ENCODE measurements at regions of chr22 and their contacts with region 1.

Region 1: GRCh38 chr22:40636380-40637182 is at the start of gene MRTFA:
- DNase-seq: peak; percentile 97 to 100 (median 99)
- ATAC-seq: peak; percentile 93
- H3K4me3 ChIP-seq: peak within 1 kb of the TSS; percentile 96
- H3K4me3 Mint-ChIP-seq: peak within 1 kb of the TSS; percentile 100
- H3K27ac ChIP-seq: peak within 1 kb of the TSS; percentile 88 to 93
- H3K27ac Mint-ChIP-seq: peak within 1 kb of the TSS; percentile 99
- H3K4me1 ChIP-seq: peaks cover 38% of the 10 kb centered on the region
- H3K4me1 Mint-ChIP-seq: peaks cover 48% of the 10 kb centered on the region
- H3K27me3 ChIP-seq: no peaks in the 10 kb centered on the region
- H3K27me3 Mint-ChIP-seq: no peaks in the 10 kb centered on the region
- CTCF ChIP-seq: no peak
- total RNA-seq, gene MRTFA: 55.3 to 58.9 TPM

Region 2: DNA sequence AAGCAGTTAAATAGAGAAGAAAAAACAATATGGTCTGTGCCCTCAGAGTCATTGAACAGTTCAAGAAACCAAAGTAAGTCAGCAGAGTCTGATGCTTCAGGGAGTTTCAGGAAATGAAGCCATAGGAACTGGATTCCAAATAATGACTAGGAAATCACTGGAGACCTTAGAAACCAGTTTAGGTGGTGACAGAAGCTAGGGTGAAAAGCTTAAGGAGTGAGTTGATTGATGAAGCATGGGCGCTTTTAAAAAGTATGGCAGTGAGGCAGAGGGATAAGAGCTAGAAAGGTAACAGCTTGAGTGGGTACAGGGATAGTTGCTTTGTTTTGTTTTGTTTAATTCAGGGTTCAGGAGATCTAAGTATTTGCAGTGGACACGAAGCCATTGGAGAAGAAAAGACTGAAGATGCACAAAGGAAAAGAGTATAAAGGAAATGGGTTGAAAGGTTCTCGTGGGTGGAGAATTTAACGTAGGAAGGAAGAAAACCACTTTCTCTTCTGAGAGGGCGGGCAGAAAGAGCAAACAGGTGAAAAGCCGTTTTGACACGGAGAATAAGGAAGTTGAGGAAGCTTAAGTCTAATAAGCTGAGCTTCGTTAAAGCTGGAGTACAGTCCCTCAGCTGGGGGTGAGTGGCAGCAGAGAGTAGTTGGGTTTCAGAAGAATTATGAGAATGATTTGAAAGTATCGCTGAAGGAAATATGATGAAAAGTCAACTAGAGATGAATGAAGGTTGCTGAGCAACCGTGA is 251.4 kb before region 1 on chr22:
- CTCF ChIA-PET with region 1: no interaction called
- POLR2A ChIA-PET with region 1: interaction called, 12 read pairs
- intact Hi-C with region 1: no loop called
- DNase-seq: peak in 8 of 14 experiments; percentile 19 to 78 (median 44)
- ATAC-seq: peak; percentile 96
- H3K4me3 ChIP-seq: peak overlapping the region; percentile 37
- H3K4me3 Mint-ChIP-seq: peak overlapping the region; percentile 82
- H3K27ac ChIP-seq: peak overlapping the region; percentile 50 to 67
- H3K27ac Mint-ChIP-seq: peak overlapping the region; percentile 90
- H3K4me1 ChIP-seq: peaks cover 42% of the 10 kb centered on the region
- H3K4me1 Mint-ChIP-seq: peaks cover 65% of the 10 kb centered on the region
- H3K27me3 ChIP-seq: no peaks in the 10 kb centered on the region
- H3K27me3 Mint-ChIP-seq: no peaks in the 10 kb centered on the region
- CTCF ChIP-seq: no peak

Region 3: DNA sequence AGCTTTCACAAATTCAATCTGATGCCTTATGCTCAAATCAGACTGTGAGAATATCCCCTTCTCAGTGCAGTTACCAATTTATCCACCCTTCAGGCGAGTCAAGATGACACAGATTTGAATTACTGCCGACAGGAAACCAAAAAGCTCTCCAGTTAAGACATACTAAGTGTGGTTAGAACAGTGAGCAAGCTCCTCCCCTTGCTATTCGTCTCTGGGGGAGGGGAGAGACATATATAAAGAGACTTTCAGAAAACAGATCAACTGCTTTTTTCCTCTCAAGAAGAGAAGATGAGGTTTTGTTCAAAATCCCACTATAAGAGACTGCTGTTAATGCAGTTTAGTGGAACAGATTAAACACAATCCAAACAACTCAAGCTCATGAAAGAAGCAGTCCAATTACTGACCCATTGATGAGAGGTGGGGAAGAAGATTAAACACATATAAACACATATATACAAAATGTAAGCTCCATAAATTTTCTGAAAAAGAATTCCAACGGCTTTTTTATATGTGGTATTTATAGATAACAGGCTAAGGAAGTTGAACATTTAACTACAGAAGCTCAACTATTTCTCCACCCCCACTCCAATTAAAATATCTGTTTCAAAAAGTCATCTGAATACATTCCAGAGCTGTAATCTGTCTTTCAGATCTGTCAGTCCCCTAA is 102.7 kb before region 1 on chr22:
- CTCF ChIA-PET with region 1: interaction called, 5 read pairs
- POLR2A ChIA-PET with region 1: interaction called, 72 read pairs
- intact Hi-C with region 1: no loop called
- DNase-seq: peak; percentile 21 to 90 (median 47)
- ATAC-seq: peak; percentile 98
- H3K4me3 ChIP-seq: peak overlapping the region; percentile 54
- H3K4me3 Mint-ChIP-seq: peak overlapping the region; percentile 84
- H3K27ac ChIP-seq: peak overlapping the region; percentile 44 to 49
- H3K27ac Mint-ChIP-seq: peak overlapping the region; percentile 88
- H3K4me1 ChIP-seq: peaks cover 31% of the 10 kb centered on the region
- H3K4me1 Mint-ChIP-seq: peaks cover 71% of the 10 kb centered on the region
- H3K27me3 ChIP-seq: no peaks in the 10 kb centered on the region
- H3K27me3 Mint-ChIP-seq: no peaks in the 10 kb centered on the region
- CTCF ChIP-seq: no peak

Region 4: GRCh38 chr22:40714192-40714951 is 77.8 kb after region 1 on chr22:
- CTCF ChIA-PET with region 1: no interaction called
- POLR2A ChIA-PET with region 1: no interaction called
- intact Hi-C with region 1: no loop called
- DNase-seq: peak in 1 of 14 experiments; percentile 5
- ATAC-seq: no peak
- H3K4me3 ChIP-seq: no peak overlapping the region
- H3K4me3 Mint-ChIP-seq: no peak overlapping the region
- H3K27ac ChIP-seq: no peak overlapping the region
- H3K27ac Mint-ChIP-seq: no peak overlapping the region
- H3K4me1 ChIP-seq: peaks cover 15% of the 10 kb centered on the region
- H3K4me1 Mint-ChIP-seq: peaks cover 20% of the 10 kb centered on the region
- H3K27me3 ChIP-seq: no peaks in the 10 kb centered on the region
- H3K27me3 Mint-ChIP-seq: no peaks in the 10 kb centered on the region
- CTCF ChIP-seq: no peak

Region 5: DNA sequence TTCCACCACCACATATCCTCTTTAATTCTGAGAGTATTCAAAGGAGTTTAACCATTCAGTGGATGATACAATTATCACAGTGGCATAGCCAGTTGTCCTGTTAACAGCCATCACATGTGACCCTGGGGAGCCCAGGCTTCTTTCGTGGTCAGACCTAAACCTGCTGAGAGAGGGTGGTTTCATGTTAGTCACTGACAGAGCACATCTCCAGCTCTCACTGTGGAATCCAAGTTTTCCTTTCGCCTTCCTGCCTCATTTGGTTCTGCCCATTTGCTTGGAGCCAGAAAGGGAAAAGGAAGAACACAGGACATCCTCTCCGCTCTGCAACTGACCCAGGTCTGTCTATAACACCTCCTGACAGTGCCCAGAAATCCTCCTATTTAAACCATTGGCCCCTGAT is 103.1 kb after region 1 on chr22:
- CTCF ChIA-PET with region 1: no interaction called
- POLR2A ChIA-PET with region 1: no interaction called
- intact Hi-C with region 1: no loop called
- DNase-seq: no peak
- ATAC-seq: no peak
- H3K4me3 ChIP-seq: no peak overlapping the region
- H3K4me3 Mint-ChIP-seq: no peak overlapping the region
- H3K27ac ChIP-seq: no peak overlapping the region
- H3K27ac Mint-ChIP-seq: no peak overlapping the region
- H3K4me1 ChIP-seq: no peaks in the 10 kb centered on the region
- H3K4me1 Mint-ChIP-seq: no peaks in the 10 kb centered on the region
- H3K27me3 ChIP-seq: no peaks in the 10 kb centered on the region
- H3K27me3 Mint-ChIP-seq: no peaks in the 10 kb centered on the region
- CTCF ChIP-seq: no peak

Region 6: GRCh38 chr22:40818747-40819598 is 182.4 kb after region 1 on chr22 and contains the start of gene SLC25A17:
- CTCF ChIA-PET with region 1: no interaction called
- POLR2A ChIA-PET with region 1: interaction called, 4 read pairs
- intact Hi-C with region 1: loop called in 1 of 2 experiments (anchors 2 kb)
- DNase-seq: peak; percentile 78 to 94 (median 86)
- ATAC-seq: peak; percentile 89
- H3K4me3 ChIP-seq: peak within 1 kb of the TSS; percentile 71
- H3K4me3 Mint-ChIP-seq: peak within 1 kb of the TSS; percentile 99
- H3K27ac ChIP-seq: peak within 1 kb of the TSS; percentile 61 to 68
- H3K27ac Mint-ChIP-seq: peak within 1 kb of the TSS; percentile 94
- H3K4me1 ChIP-seq: peaks cover 24% of the 10 kb centered on the region
- H3K4me1 Mint-ChIP-seq: peaks cover 46% of the 10 kb centered on the region
- H3K27me3 ChIP-seq: no peaks in the 10 kb centered on the region
- H3K27me3 Mint-ChIP-seq: no peaks in the 10 kb centered on the region
- CTCF ChIP-seq: peak; percentile 2
- total RNA-seq, gene SLC25A17: 2.8 to 4.0 TPM

Measured in CD4-positive, alpha-beta T cell (primary cell).